Stomach (tissue), 19 donors: ENCODE measurements at regions of chr11 and their contacts with region 1.

Region 1: DNA sequence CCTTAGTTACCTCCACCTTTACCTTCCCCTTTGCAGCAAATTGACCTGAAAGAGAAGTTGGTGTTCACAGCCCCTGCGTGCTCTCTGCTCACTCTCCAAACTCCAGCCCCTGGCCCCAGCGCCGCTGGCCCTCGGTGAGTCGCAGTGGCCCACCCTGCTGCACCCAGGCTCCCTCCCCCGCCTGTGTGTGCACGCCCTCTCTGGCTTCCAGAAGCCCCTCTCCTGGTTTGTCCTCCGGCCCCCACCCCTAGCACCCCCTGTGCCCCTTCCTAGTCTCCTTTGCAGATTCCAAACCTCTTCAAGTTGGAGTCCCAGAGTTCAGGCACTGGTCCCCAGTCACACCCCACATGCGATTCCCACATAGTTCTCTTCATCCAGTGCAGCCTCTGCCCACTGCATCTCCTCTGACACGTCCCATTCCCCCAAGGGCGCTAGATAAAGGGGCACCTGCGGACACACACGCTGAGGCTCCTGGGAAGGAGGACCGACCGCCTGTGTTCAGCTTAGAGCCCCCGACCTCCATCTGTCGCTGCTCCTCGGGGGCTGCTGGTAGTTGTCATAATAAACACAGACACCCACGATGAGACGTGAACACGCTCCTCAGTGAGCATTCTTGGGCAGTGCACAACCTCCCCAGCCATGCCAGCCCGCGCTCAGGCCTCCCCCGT is 1.5 kb upstream of the PHRF1 start:
- DNase-seq: no peak
- H3K4me3 ChIP-seq: peak overlapping the region; percentile 61 to 98 (median 67)
- H3K27ac ChIP-seq: peak overlapping the region in 2 of 5 donors; percentile 57 to 75
- H3K4me1 ChIP-seq: peaks cover 37 to 49% (median 44%) of the 10 kb centered on the region in 4 donors
- H3K27me3 ChIP-seq: peaks cover 0 to 12% (median 4%) of the 10 kb centered on the region in 3 donors
- CTCF ChIP-seq: no peak
- EP300 ChIP-seq: no peak
- POLR2A ChIP-seq: no peak

Region 2: GRCh38 chr11:520428-521176 is 54.2 kb before region 1 on chr11:
- intact Hi-C with region 1: loop called (anchors 5 kb)
- DNase-seq: no peak
- H3K4me3 ChIP-seq: no peak overlapping the region
- H3K27ac ChIP-seq: no peak overlapping the region
- H3K4me1 ChIP-seq: peaks cover 0 to 16% (median 12%) of the 10 kb centered on the region in 4 donors
- H3K27me3 ChIP-seq: no peaks in the 10 kb centered on the region
- CTCF ChIP-seq: no peak
- EP300 ChIP-seq: no peak
- POLR2A ChIP-seq: no peak